Transverse colon (tissue), 4 donors: ENCODE measurements at regions of chr14 and their contacts with region 1.

Region 1: GRCh38 chr14:65428691-65429090 is 16.2 kb downstream of the FUT8 start:
- DNase-seq: no peak
- H3K4me3 ChIP-seq: no peak overlapping the region
- H3K27ac ChIP-seq: no peak overlapping the region
- H3K4me1 ChIP-seq: peaks cover 0 to 3% (median 0%) of the 10 kb centered on the region in 4 donors
- H3K27me3 ChIP-seq: no peaks in the 10 kb centered on the region
- CTCF ChIP-seq: no peak
- EP300 ChIP-seq: no peak
- POLR2A ChIP-seq: no peak

Region 2: DNA sequence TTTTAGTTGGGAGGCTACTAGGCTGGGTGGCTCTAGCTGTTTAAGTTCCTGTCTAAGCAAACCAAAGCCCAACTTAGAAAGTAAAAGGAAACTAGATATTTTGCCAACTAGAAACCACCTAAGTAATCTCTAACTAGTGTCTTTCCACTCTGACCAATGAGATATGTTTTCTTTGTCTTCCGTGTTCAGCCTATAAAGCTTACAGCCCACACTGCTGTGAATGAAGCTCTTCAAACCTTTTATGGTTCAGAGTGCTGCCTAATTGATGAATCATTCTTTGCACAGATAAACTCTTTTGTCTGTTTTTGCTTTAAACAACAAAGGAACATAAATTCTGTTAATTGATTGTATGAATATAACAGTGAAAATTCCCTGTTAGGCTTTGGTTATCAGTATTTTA is 49.9 kb after region 1 on chr14:
- in situ Hi-C with region 1: no loop called
- intact Hi-C with region 1: loop called (anchors 1 kb)
- DNase-seq: no peak
- H3K4me3 ChIP-seq: no peak overlapping the region
- H3K27ac ChIP-seq: no peak overlapping the region
- H3K4me1 ChIP-seq: peaks cover 0 to 22% (median 0%) of the 10 kb centered on the region in 4 donors
- H3K27me3 ChIP-seq: no peaks in the 10 kb centered on the region
- CTCF ChIP-seq: no peak
- EP300 ChIP-seq: no peak
- POLR2A ChIP-seq: no peak

Region 3: GRCh38 chr14:65565948-65566347 is 137.3 kb after region 1 on chr14:
- in situ Hi-C with region 1: no loop called
- intact Hi-C with region 1: no loop called
- DNase-seq: no peak
- H3K4me3 ChIP-seq: no peak overlapping the region
- H3K27ac ChIP-seq: no peak overlapping the region
- H3K4me1 ChIP-seq: no peaks in the 10 kb centered on the region
- H3K27me3 ChIP-seq: no peaks in the 10 kb centered on the region
- CTCF ChIP-seq: no peak
- EP300 ChIP-seq: no peak
- POLR2A ChIP-seq: no peak